ENCODE measurements at regions of chr20 and their contacts with region 1.

Region 1: GRCh38 chr20:44111712-44112335 is 75.2 kb downstream of the JPH2 start:
- DNase-seq: no peak
- ATAC-seq: no peak
- H3K4me3 ChIP-seq: no peak overlapping the region
- H3K27ac ChIP-seq: no peak overlapping the region
- H3K4me1 ChIP-seq: peaks cover 3 to 4% of the 10 kb centered on the region in 2 experiments; a peak in 2 of 4 replicates
- H3K27me3 ChIP-seq: no peaks in the 10 kb centered on the region
- CTCF ChIP-seq: no peak
- POLR2A ChIP-seq: no peak
- RAD21 ChIP-seq: no peak

Region 2: DNA sequence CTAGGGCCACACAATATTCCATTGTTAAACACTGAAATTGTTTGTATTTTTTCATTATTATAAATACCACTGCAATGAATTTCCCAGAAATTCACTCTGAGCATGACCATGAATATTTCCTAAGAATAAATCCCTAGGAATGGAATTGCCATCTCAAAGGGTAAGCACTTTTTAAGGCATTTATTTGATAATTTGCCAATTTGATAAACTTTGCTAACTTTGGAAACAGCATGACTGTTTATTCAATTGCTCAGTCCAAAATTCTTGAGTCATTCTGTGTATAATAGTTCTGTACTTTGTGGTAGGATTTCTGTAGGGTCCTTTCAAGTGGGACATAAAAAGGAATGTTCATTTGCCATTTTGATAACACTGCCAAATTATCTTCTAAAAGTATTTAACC is 241.3 kb before region 1 on chr20:
- CTCF ChIA-PET with region 1: no interaction called
- POLR2A ChIA-PET with region 1: no interaction called
- RAD21 ChIA-PET with region 1: no interaction called
- intact Hi-C with region 1: no loop called
- DNase-seq: no peak
- ATAC-seq: no peak
- H3K4me3 ChIP-seq: no peak overlapping the region
- H3K27ac ChIP-seq: no peak overlapping the region
- H3K4me1 ChIP-seq: no peaks in the 10 kb centered on the region
- H3K27me3 ChIP-seq: no peaks in the 10 kb centered on the region
- CTCF ChIP-seq: no peak
- POLR2A ChIP-seq: no peak
- RAD21 ChIP-seq: no peak

Region 3: DNA sequence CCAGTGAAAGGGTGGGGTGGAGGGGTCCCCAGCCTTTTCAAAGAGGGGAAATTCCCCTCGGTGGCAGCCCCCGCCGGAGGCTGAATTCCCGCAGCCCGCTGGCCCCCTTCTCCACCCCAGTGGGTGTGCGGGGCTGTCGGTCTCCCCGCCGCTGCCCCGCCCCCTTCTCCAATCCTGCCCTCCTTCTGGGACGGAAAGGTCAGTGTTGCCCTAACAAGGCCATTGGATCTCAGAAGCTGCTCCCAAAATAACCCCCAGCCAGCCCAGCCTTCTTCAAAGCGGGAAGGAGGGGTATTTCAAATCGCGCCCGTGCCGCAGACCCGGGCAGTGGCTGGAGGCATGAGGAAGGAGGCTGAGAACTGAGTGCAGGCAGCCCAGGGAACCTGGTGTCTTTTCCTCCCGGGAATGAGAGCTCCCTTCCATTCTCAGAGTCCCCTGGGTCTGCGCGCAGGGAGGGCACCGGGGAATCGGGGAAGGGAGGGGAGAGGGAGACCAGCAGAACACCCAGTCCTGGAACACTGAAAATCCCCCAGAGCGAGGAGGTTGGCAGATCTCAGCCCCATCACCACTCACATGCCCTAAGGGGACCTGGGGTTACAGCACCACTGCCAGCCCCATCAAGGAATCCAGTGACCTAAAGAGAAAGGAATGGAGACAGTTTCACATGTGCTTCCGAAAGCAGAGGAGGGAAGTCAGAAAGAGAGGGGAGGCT is 75.4 kb after region 1 on chr20 and contains the start of gene JPH2:
- CTCF ChIA-PET with region 1: interaction called, 197 read pairs
- POLR2A ChIA-PET with region 1: interaction called, 7 read pairs
- RAD21 ChIA-PET with region 1: interaction called, 21 to 24 read pairs
- intact Hi-C with region 1: loop called (anchors 1 kb)
- DNase-seq: no peak
- ATAC-seq: peak; percentile 36
- H3K4me3 ChIP-seq: peak within 1 kb of the TSS; percentile 16 to 30; a peak in 3 of 4 replicates
- H3K27ac ChIP-seq: no peak within 1 kb of the TSS
- H3K4me1 ChIP-seq: peaks cover 16 to 22% of the 10 kb centered on the region in 2 experiments
- H3K27me3 ChIP-seq: no peaks in the 10 kb centered on the region
- CTCF ChIP-seq: no peak
- POLR2A ChIP-seq: no peak
- RAD21 ChIP-seq: no peak
- total RNA-seq, gene JPH2: 0.17 TPM

Region 4: DNA sequence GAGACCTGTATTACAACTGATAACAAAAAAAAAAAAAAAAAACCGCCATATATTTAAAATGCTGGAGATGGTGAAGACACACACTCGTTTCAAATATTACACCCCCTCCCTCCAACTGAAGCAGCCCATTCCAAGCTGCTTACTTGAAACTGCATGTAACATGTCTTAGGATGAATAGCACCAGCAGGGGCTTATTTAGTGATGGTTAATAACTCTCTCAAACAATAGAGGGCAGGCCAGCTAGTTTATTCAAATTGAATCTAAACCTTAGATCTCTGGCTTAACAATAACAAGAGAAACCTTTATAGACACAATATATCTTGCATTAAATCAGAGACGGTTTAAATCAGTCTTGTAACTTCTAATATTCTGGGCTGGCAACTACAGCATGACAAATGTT is 84.4 kb after region 1 on chr20:
- CTCF ChIA-PET with region 1: interaction called, 197 read pairs
- POLR2A ChIA-PET with region 1: no interaction called
- RAD21 ChIA-PET with region 1: interaction called, 21 to 24 read pairs
- intact Hi-C with region 1: no loop called
- DNase-seq: no peak
- ATAC-seq: peak; percentile 60
- H3K4me3 ChIP-seq: no peak overlapping the region
- H3K27ac ChIP-seq: no peak overlapping the region
- H3K4me1 ChIP-seq: no peaks in the 10 kb centered on the region
- H3K27me3 ChIP-seq: no peaks in the 10 kb centered on the region
- CTCF ChIP-seq: peak in 2 of 3 experiments; percentile 23 to 34; a peak in 2 of 6 replicates
- POLR2A ChIP-seq: no peak
- RAD21 ChIP-seq: no peak

Region 5: GRCh38 chr20:44310664-44311639 is 199.1 kb after region 1 on chr20 and contains the start of gene FITM2:
- CTCF ChIA-PET with region 1: interaction called, 14 read pairs
- POLR2A ChIA-PET with region 1: no interaction called
- RAD21 ChIA-PET with region 1: no interaction called
- intact Hi-C with region 1: loop called (anchors 2 kb)
- DNase-seq: peak; percentile 93
- ATAC-seq: peak; percentile 98
- H3K4me3 ChIP-seq: peak within 1 kb of the TSS; percentile 93 to 98
- H3K27ac ChIP-seq: peak within 1 kb of the TSS; percentile 54; the same call in 1 of the 2 replicates
- H3K4me1 ChIP-seq: peaks cover 8 to 13% of the 10 kb centered on the region in 2 experiments; a peak in 3 of 4 replicates
- H3K27me3 ChIP-seq: no peaks in the 10 kb centered on the region
- CTCF ChIP-seq: peak; percentile 83 to 92 (median 91)
- POLR2A ChIP-seq: peak; percentile 46
- RAD21 ChIP-seq: peak; percentile 85
- total RNA-seq, gene FITM2: 5.2 TPM

Region 6: DNA sequence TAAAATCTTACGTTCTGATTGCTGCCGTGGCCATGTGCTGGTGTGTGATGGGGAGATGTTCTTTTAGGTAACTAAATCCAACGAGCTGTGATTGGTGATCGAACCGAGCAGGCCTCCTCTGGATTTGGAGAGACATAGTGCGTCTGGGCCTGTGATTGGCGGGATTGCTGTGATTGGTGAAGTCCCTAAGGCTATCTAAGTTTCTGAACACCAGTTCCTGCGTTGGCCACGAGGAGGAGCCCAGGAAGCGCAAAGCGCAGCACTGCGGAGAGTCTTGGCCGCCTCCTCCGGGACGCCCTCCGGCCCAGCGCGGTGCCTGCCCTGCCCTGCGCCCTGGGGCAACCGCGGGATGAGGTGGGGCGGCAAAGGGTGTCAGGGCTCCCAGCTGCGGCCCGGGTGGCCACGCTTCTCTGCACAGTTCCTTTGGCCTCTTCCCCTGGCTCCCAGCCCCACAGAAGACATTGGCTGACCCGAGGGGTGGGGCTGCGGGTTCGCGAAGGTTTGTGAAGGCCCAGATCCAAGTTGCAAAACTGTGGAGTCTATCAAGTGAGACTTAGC is 276.7 kb after region 1 on chr20:
- CTCF ChIA-PET with region 1: interaction called, 12 read pairs
- POLR2A ChIA-PET with region 1: no interaction called
- RAD21 ChIA-PET with region 1: no interaction called
- intact Hi-C with region 1: loop called (anchors 5 kb)
- DNase-seq: peak; percentile 88
- ATAC-seq: peak; percentile 94
- H3K4me3 ChIP-seq: no peak overlapping the region
- H3K27ac ChIP-seq: no peak overlapping the region
- H3K4me1 ChIP-seq: peaks cover 2 to 21% of the 10 kb centered on the region in 2 experiments; a peak in 2 of 4 replicates
- H3K27me3 ChIP-seq: no peaks in the 10 kb centered on the region
- CTCF ChIP-seq: peak; percentile 86 to 92 (median 89)
- POLR2A ChIP-seq: no peak
- RAD21 ChIP-seq: peak; percentile 99

Region 7: DNA sequence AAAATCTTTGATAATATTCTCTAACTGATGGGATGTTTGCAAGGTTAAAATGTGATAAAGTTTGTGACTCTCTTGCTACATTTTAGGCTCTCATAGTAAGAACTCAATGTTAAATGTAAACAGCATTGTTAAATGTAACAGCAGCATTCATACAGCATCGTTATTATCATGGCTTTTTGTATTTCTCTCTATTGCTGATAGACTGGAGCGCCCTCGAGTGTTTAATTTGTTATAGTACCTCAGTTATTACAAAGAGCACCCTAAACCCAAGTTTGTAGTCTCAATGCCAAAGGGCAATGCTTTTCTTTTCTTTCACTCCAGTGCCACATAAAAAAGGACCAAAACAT is 348.9 kb after region 1 on chr20:
- CTCF ChIA-PET with region 1: no interaction called
- POLR2A ChIA-PET with region 1: no interaction called
- RAD21 ChIA-PET with region 1: no interaction called
- intact Hi-C with region 1: loop called (anchors 5 kb)
- DNase-seq: peak; percentile 31
- ATAC-seq: peak; percentile 89
- H3K4me3 ChIP-seq: no peak overlapping the region
- H3K27ac ChIP-seq: no peak overlapping the region
- H3K4me1 ChIP-seq: peaks cover 0 to 8% of the 10 kb centered on the region in 2 experiments; a peak in 1 of 4 replicates
- H3K27me3 ChIP-seq: no peaks in the 10 kb centered on the region
- CTCF ChIP-seq: peak; percentile 55 to 84 (median 65)
- POLR2A ChIP-seq: no peak
- RAD21 ChIP-seq: peak; percentile 87